HepG2 (cell line): ENCODE measurements at regions of chr5 and their contacts with region 1.

Region 1: DNA sequence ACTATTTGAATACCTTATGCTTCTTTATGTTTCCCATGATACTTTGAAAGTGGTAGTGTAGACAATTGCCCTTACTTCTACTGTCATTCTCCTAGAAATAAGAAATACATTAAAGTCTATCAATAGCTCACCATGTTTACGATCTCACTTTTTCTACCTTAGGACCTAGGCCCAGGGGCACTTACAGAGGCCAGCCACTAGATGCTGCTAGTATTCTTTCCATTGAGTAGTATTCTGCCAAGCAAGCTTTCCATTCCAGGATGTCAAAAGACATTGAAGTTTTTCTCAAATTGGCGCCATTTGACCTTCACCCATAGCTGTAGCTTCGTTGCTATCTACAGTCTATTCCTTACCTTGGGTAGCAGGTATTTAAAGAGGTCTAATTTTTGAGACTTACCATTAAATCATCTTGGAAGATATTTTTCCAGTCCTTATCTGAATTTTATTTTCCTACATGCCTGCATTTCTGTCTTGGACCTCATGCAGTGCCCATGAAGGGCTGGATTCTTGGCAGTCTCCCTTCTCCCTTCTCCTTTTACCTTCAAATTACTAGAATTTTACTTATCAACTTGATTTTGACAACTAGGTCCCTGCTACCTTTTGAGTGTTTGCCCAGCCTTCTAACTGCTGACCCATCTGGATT is 246.0 kb upstream of the NUDT12 start:
- DNase-seq: peak; percentile 34
- ATAC-seq: peak; percentile 97
- H3K4me3 ChIP-seq: no peak overlapping the region
- H3K27ac ChIP-seq: no peak overlapping the region
- H3K4me1 ChIP-seq: no peaks in the 10 kb centered on the region
- H3K27me3 ChIP-seq: no peaks in the 10 kb centered on the region
- CTCF ChIP-seq: peak; percentile 81
- EP300 ChIP-seq: no peak
- POLR2A ChIP-seq: no peak
- RAD21 ChIP-seq: peak; percentile 63

Region 2: GRCh38 chr5:103224118-103224893 is 584.3 kb before region 1 on chr5:
- CTCF ChIA-PET with region 1: no interaction called
- POLR2A ChIA-PET with region 1: no interaction called
- in situ Hi-C with region 1: no loop called
- intact Hi-C with region 1: no loop called
- DNase-seq: peak; percentile 60
- ATAC-seq: peak; percentile 96
- H3K4me3 ChIP-seq: peak overlapping the region in 2 of 3 experiments; percentile 14 to 39; a peak in 2 of 6 replicates
- H3K27ac ChIP-seq: no peak overlapping the region
- H3K4me1 ChIP-seq: peaks cover 6% of the 10 kb centered on the region; the same call in 1 of the 2 replicates
- H3K27me3 ChIP-seq: no peaks in the 10 kb centered on the region
- CTCF ChIP-seq: peak; percentile 80
- EP300 ChIP-seq: no peak
- POLR2A ChIP-seq: no peak
- RAD21 ChIP-seq: peak; percentile 44; the same call in 1 of the 2 replicates

Region 3: DNA sequence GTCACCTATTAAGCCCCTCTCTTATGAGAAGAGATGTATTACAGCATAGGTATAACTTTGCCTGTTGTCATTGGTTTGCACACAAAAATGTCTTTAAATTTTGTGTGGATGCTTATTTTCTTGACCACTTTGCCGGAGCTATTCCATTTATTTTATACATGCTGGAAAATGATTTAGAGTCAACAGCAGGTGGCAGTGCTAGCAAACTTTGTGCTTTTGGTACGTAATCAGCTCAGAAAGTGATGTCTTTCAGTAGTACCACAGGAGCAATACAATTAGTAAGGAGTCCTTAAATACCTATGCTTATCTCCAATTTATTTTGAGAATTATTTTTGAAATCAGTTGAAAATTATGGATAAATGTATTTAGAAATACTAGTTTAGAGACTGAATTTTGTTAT is 226.2 kb before region 1 on chr5:
- CTCF ChIA-PET with region 1: no interaction called
- POLR2A ChIA-PET with region 1: no interaction called
- in situ Hi-C with region 1: no loop called
- intact Hi-C with region 1: loop called (anchors 5 kb)
- DNase-seq: peak; percentile 35
- ATAC-seq: no peak; the same call in 2 of the 3 replicates
- H3K4me3 ChIP-seq: no peak overlapping the region
- H3K27ac ChIP-seq: no peak overlapping the region
- H3K4me1 ChIP-seq: no peaks in the 10 kb centered on the region
- H3K27me3 ChIP-seq: no peaks in the 10 kb centered on the region; a peak in 1 of 5 replicates
- CTCF ChIP-seq: peak; percentile 53
- EP300 ChIP-seq: no peak
- POLR2A ChIP-seq: no peak
- RAD21 ChIP-seq: no peak

Region 4: GRCh38 chr5:103821361-103821760 is 12.8 kb after region 1 on chr5:
- CTCF ChIA-PET with region 1: no interaction called
- POLR2A ChIA-PET with region 1: no interaction called
- in situ Hi-C with region 1: no loop called
- intact Hi-C with region 1: no loop called
- DNase-seq: no peak
- ATAC-seq: no peak
- H3K4me3 ChIP-seq: no peak overlapping the region
- H3K27ac ChIP-seq: no peak overlapping the region
- H3K4me1 ChIP-seq: no peaks in the 10 kb centered on the region
- H3K27me3 ChIP-seq: no peaks in the 10 kb centered on the region
- CTCF ChIP-seq: no peak
- EP300 ChIP-seq: no peak
- POLR2A ChIP-seq: no peak
- RAD21 ChIP-seq: no peak

Region 5: DNA sequence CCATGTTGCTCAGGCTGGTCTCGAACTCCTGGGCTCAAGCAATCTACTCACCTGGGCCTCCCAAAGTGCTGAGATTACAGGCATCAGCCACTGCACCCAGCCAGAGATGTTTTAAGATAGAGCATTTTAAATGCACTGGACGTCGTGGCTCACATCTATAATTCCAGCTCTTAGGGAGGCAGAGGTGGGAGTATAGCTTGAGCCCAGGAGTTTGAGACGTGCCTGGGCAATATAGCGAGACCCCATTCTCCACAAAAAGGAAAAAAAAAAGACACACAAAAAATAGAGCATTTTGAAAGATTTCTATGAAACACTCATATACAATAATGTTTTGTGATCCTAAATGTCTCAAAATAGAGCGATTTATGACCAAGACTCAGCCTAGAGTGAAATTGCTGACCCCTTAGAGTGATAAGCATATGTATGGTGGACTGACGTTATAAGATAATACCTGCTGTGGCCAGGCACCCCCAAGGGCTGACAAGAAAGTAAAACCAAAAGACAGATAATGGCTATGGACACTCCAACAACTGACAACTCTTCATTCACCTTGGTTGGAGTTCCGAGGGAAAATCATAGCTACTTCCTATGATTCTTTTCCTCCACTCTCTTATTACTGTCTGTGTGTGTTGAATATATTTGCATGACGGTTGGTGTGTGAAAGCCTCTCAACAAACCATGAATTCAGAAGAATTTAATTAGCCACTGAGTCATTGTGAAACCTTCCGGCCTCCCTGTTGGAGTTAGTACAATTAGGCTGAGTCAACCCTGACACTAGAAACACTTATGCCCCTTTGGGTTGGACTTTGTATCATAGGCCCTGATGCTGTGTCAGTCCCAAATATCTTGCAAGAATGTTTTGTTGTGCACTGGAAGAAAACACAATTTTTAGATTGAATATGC is 280.5 kb after region 1 on chr5:
- CTCF ChIA-PET with region 1: no interaction called
- POLR2A ChIA-PET with region 1: no interaction called
- in situ Hi-C with region 1: no loop called
- intact Hi-C with region 1: no loop called
- DNase-seq: peak; percentile 0
- ATAC-seq: no peak
- H3K4me3 ChIP-seq: no peak overlapping the region
- H3K27ac ChIP-seq: no peak overlapping the region
- H3K4me1 ChIP-seq: no peaks in the 10 kb centered on the region
- H3K27me3 ChIP-seq: no peaks in the 10 kb centered on the region
- CTCF ChIP-seq: no peak
- EP300 ChIP-seq: no peak
- POLR2A ChIP-seq: no peak
- RAD21 ChIP-seq: no peak

Region 6: DNA sequence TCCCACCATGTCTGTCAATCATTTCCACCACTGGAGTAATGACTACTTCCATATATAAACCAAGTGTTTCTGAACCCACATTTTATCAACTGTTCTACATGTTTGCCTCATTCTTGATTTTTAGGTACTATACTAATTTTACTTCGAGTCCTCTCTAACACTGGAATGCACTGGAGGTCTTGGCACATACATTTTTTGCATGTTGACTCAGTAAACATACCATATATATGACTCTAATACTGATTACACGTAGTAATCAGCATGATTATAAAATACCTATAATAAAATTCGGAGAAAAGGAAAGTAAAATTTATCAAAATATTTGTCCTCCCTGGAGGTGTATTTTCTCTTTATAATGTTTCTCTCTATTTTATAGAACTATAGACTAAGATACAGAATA is 375.7 kb after region 1 on chr5:
- CTCF ChIA-PET with region 1: interaction called, 21 read pairs
- POLR2A ChIA-PET with region 1: interaction called, 3 read pairs
- in situ Hi-C with region 1: loop called (anchors 5 kb)
- intact Hi-C with region 1: loop called (anchors 1 kb)
- DNase-seq: no peak
- ATAC-seq: no peak
- H3K4me3 ChIP-seq: no peak overlapping the region
- H3K27ac ChIP-seq: no peak overlapping the region
- H3K4me1 ChIP-seq: no peaks in the 10 kb centered on the region
- H3K27me3 ChIP-seq: no peaks in the 10 kb centered on the region
- CTCF ChIP-seq: no peak
- EP300 ChIP-seq: no peak
- POLR2A ChIP-seq: no peak
- RAD21 ChIP-seq: no peak